Gastrocnemius medialis (tissue), 4 donors: ENCODE measurements at regions of chr3 and their contacts with region 1.

Region 1: GRCh38 chr3:43286115-43286840 is at the start of gene SNRK:
- DNase-seq: peak; percentile 68 to 80
- ATAC-seq: peak; percentile 93 to 96
- H3K4me3 ChIP-seq: peak within 1 kb of the TSS; percentile 62 to 79 (median 72)
- H3K27ac ChIP-seq: peak within 1 kb of the TSS; percentile 81 to 88 (median 86)
- H3K4me1 ChIP-seq: peaks cover 41 to 46% of the 10 kb centered on the region in 2 donors
- H3K27me3 ChIP-seq: no peaks in the 10 kb centered on the region
- CTCF ChIP-seq: peak in 4 of 5 experiments; percentile 4 to 39 (median 16)
- POLR2A ChIP-seq: peak; percentile 94 to 97
- total RNA-seq, gene SNRK: 18.4 to 29.0 (median 21.9) TPM

Region 2: GRCh38 chr3:43105596-43106292 is 180.5 kb before region 1 on chr3 and contains the start of gene POMGNT2:
- in situ Hi-C with region 1: no loop called
- intact Hi-C with region 1: loop called (anchors 5 kb)
- DNase-seq: peak; percentile 80 to 86
- ATAC-seq: peak; percentile 94 to 96
- H3K4me3 ChIP-seq: peak within 1 kb of the TSS; percentile 78 to 95 (median 93)
- H3K27ac ChIP-seq: peak within 1 kb of the TSS; percentile 71 to 88 (median 78)
- H3K4me1 ChIP-seq: peaks cover 18 to 23% of the 10 kb centered on the region in 2 donors
- H3K27me3 ChIP-seq: no peaks in the 10 kb centered on the region
- CTCF ChIP-seq: no peak
- POLR2A ChIP-seq: peak; percentile 55 to 67
- total RNA-seq, gene POMGNT2: 20.4 to 72.8 (median 52.4) TPM

Region 3: GRCh38 chr3:43194490-43195114 is 91.7 kb before region 1 on chr3:
- in situ Hi-C with region 1: no loop called
- intact Hi-C with region 1: no loop called
- DNase-seq: no peak
- ATAC-seq: no peak
- H3K4me3 ChIP-seq: no peak overlapping the region
- H3K27ac ChIP-seq: no peak overlapping the region
- H3K4me1 ChIP-seq: no peaks in the 10 kb centered on the region
- H3K27me3 ChIP-seq: no peaks in the 10 kb centered on the region
- CTCF ChIP-seq: no peak
- POLR2A ChIP-seq: no peak

Region 4: GRCh38 chr3:43231276-43232000 is 54.8 kb before region 1 on chr3:
- in situ Hi-C with region 1: no loop called
- intact Hi-C with region 1: no loop called
- DNase-seq: no peak
- ATAC-seq: no peak
- H3K4me3 ChIP-seq: no peak overlapping the region
- H3K27ac ChIP-seq: no peak overlapping the region
- H3K4me1 ChIP-seq: no peaks in the 10 kb centered on the region
- H3K27me3 ChIP-seq: no peaks in the 10 kb centered on the region
- CTCF ChIP-seq: no peak
- POLR2A ChIP-seq: no peak

Region 5: GRCh38 chr3:43246976-43247375 is 39.3 kb before region 1 on chr3:
- in situ Hi-C with region 1: no loop called
- intact Hi-C with region 1: no loop called
- DNase-seq: no peak
- ATAC-seq: peak in 1 of 2 donors; percentile 52
- H3K4me3 ChIP-seq: no peak overlapping the region
- H3K27ac ChIP-seq: peak overlapping the region in 2 of 4 donors; percentile 11 to 44
- H3K4me1 ChIP-seq: peaks cover 0 to 28% of the 10 kb centered on the region in 2 donors
- H3K27me3 ChIP-seq: no peaks in the 10 kb centered on the region
- CTCF ChIP-seq: no peak
- POLR2A ChIP-seq: no peak

Region 6: DNA sequence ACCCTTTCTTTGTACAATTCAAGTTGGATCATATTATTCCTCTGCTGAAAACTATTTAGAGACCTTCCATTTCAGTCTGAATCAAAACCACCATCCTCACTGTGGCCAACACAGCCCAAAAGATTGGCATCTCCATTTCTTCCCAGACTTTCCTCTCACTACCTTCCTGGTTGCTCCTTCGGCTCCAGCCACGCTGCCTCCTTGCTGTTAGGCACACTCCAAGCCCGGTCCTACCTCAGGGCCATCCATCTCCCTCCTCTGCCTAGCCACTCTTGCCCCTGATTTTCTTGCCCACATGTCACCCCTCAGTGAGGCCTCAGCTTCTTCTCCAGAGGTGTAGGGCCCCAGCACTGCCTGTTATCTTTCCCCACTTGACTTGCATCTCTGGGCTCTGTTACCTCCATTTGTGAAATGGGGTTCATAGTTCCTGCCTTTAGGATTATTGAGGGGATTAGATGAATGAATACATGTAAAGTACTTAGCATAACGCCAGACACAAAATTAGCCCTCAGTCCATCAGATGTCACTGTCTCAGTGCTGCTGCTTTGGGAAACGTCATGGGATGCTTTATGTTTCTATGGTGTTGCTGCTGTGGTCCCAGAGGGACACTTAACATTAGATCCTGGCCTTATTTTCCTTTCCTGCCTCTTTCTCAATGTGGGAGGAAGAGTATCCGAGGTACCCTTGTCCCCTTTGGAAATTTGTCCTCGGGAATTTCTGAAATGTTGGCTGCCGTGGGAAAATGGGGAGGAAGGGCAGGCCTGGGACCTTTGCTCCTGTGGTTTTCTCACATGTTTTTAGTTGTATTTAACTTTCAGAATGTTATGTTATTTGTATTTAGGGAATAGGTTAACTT is 31.4 kb after region 1 on chr3:
- in situ Hi-C with region 1: no loop called
- intact Hi-C with region 1: loop called (anchors 2 kb)
- DNase-seq: peak in 1 of 2 donors; percentile 31
- ATAC-seq: peak; percentile 62 to 65
- H3K4me3 ChIP-seq: no peak overlapping the region
- H3K27ac ChIP-seq: peak overlapping the region; percentile 75 to 80 (median 75)
- H3K4me1 ChIP-seq: peaks cover 55 to 61% of the 10 kb centered on the region in 2 donors
- H3K27me3 ChIP-seq: no peaks in the 10 kb centered on the region
- CTCF ChIP-seq: no peak
- POLR2A ChIP-seq: no peak

Region 7: DNA sequence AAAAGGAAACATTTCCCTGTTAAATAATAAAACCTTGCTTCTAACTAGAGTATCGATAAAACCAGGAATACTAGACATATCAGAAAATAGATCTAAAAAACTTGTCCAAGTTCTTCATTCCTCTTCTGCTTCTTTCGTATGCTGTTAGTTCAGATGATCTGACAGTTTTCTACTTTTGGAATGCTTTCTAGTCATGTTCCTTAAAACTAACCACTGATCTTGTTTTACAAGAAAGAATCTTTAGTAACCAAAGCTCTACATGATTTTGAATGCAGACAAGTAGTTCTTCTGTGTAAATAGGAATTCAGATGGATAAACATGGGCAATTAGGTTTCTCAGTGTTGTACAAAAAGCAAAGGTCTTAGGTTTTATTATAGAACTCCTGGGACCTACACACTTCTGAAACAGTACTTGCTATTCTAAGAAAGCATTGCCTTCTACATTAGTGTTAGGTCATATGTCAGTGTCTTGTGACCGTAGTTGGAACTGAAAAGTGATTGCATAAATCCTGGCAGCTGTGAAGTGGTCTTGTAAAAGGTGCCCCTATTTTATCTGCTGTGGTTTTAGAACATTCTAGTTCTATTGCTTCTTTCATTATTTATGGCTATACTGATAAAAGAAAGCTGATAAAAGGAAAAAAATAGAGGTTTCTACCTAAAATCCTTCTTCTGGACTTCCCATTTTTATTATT is 40.8 kb after region 1 on chr3:
- in situ Hi-C with region 1: loop called in 1 of 4 experiments (anchors 5 kb)
- intact Hi-C with region 1: no loop called
- DNase-seq: peak; percentile 34 to 47
- ATAC-seq: peak; percentile 94 to 97
- H3K4me3 ChIP-seq: peak overlapping the region in 1 of 4 donors; percentile 2
- H3K27ac ChIP-seq: peak overlapping the region; percentile 73 to 90 (median 84)
- H3K4me1 ChIP-seq: peaks cover 35 to 47% of the 10 kb centered on the region in 2 donors
- H3K27me3 ChIP-seq: no peaks in the 10 kb centered on the region
- CTCF ChIP-seq: no peak
- POLR2A ChIP-seq: peak in 1 of 2 donors; percentile 20

Region 8: DNA sequence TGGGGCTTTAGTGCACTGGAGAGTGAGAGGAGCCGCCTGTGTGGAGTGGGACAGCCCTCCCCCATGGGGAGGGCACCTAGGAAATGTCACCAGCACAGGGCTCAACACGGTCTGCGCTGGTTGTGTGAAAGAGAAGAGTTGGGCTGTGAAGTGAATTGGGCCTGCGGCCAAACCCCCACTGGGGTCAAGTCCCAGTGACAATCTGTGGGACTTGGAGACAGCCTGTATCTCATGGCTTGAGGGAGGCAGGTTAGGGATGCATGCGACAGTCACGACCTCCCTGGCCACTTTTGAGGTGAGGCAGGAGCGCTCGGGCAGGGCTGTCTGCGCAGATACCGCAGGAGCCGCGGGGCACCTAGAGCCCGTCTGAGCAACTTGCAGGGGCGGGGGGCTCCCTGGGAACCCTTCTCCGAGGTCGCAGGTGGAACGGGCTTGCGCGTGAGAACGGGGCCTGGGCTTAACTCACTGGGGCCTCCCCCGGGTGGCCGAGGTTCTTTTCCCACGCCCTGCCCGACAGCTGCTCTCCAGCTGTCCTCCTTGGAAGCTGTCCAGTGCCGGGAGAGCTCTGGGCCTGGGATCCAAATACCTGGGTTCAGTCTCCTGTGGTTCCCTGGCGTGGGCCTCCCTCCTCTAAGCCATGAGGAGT is 77.5 kb after region 1 on chr3:
- in situ Hi-C with region 1: no loop called
- intact Hi-C with region 1: loop called (anchors 10 kb)
- DNase-seq: peak; percentile 52 to 63
- ATAC-seq: peak; percentile 35 to 43
- H3K4me3 ChIP-seq: peak overlapping the region in 3 of 4 donors; percentile 17 to 25 (median 21)
- H3K27ac ChIP-seq: peak overlapping the region; percentile 47 to 77 (median 56)
- H3K4me1 ChIP-seq: peaks cover 21 to 25% of the 10 kb centered on the region in 2 donors
- H3K27me3 ChIP-seq: no peaks in the 10 kb centered on the region
- CTCF ChIP-seq: no peak
- POLR2A ChIP-seq: no peak

Region 9: GRCh38 chr3:43503067-43503728 is 216.9 kb after region 1 on chr3:
- in situ Hi-C with region 1: loop called in 1 of 4 experiments (anchors 10 kb)
- intact Hi-C with region 1: loop called (anchors 10 kb)
- DNase-seq: no peak
- ATAC-seq: peak in 1 of 2 donors; percentile 77
- H3K4me3 ChIP-seq: no peak overlapping the region
- H3K27ac ChIP-seq: no peak overlapping the region
- H3K4me1 ChIP-seq: no peaks in the 10 kb centered on the region
- H3K27me3 ChIP-seq: no peaks in the 10 kb centered on the region
- CTCF ChIP-seq: peak; percentile 26 to 71 (median 48)
- POLR2A ChIP-seq: no peak

Region 10: GRCh38 chr3:43583481-43583880 is 297.2 kb after region 1 on chr3:
- in situ Hi-C with region 1: no loop called
- intact Hi-C with region 1: no loop called
- DNase-seq: no peak
- ATAC-seq: no peak
- H3K4me3 ChIP-seq: no peak overlapping the region
- H3K27ac ChIP-seq: no peak overlapping the region
- H3K4me1 ChIP-seq: peaks cover 9 to 11% of the 10 kb centered on the region in 2 donors
- H3K27me3 ChIP-seq: no peaks in the 10 kb centered on the region
- CTCF ChIP-seq: no peak
- POLR2A ChIP-seq: no peak

Region 11: GRCh38 chr3:43690400-43691119 is 404.3 kb after region 1 on chr3 and contains the start of gene ABHD5:
- in situ Hi-C with region 1: no loop called
- intact Hi-C with region 1: loop called (anchors 5 kb)
- DNase-seq: peak; percentile 68 to 85
- ATAC-seq: peak; percentile 91
- H3K4me3 ChIP-seq: peak within 1 kb of the TSS; percentile 66 to 93 (median 76)
- H3K27ac ChIP-seq: peak within 1 kb of the TSS; percentile 82 to 95 (median 90)
- H3K4me1 ChIP-seq: peaks cover 23 to 28% of the 10 kb centered on the region in 2 donors
- H3K27me3 ChIP-seq: no peaks in the 10 kb centered on the region
- CTCF ChIP-seq: peak in 4 of 5 experiments; percentile 5 to 29 (median 19)
- POLR2A ChIP-seq: peak; percentile 98
- total RNA-seq, gene ABHD5: 18.6 to 43.7 (median 33.7) TPM